ENCODE measurements at regions of chr3 and their contacts with region 1.

Region 1: GRCh38 chr3:111338059-111338698 is 203.8 kb upstream of the CD96 start:
- DNase-seq: peak; percentile 86
- ATAC-seq: peak; percentile 95
- H3K4me3 ChIP-seq: no peak overlapping the region
- H3K27ac ChIP-seq: no peak overlapping the region
- H3K4me1 ChIP-seq: no peaks in the 10 kb centered on the region; the same call in 1 of the 2 replicates
- H3K27me3 ChIP-seq: no peaks in the 10 kb centered on the region
- CTCF ChIP-seq: peak; percentile 91
- POLR2A ChIP-seq: 0 out of 2 replicates have a peak, but pooled peaks have one; percentile 22
- RAD21 ChIP-seq: peak; percentile 95

Region 2: DNA sequence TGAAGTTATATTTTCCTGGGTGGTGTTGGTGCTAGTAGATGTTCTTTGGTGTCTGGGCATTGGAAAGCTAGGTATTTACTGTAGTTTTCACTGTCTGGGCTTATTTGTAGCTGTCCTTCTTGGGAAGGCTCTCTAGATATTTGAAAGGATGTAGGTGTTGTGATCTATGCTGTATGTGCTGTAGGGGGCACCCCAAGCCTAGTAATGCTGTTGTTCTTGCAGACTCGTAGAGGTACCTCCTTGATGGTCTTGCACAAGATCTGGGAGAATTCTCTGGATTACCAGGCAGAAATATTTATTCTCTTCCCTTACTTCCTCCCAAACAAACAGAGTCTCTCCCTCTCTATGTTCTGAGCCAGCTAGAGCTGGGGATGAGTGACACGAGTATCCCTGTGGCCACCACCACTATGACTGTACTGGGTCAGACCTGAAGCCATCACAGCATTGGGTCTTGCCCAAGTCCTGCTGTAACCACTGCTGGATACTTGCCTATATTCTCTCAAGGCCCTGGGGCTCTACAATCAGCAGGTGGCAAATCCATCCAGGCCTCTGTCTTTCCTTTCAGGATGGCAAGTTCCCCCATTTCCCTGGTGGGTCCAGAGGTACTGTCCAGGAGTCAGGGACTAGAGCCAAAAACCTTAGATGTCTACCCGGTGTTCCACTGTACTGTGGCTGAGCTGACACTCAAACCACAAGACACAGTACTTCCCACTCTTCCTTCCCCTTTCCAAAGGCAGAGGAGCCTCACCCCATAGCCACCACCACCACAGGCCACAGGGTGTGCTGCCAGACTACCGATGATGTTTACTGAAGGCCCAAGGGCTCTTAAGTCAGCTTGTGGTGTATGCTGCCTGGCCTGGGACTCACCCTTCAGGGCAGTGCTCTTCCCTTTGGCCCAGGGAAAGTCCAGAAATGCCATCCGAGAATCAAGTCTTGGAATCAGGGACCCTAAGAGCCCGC is 1805.6 kb before region 1 on chr3:
- CTCF ChIA-PET with region 1: interaction called, 6 read pairs
- POLR2A ChIA-PET with region 1: no interaction called
- dilution Hi-C with region 1: no loop called
- in situ Hi-C with region 1: loop called (anchors 10 kb)
- intact Hi-C with region 1: loop called (anchors 5 kb)
- DNase-seq: peak; percentile 83
- ATAC-seq: peak; percentile 96
- H3K4me3 ChIP-seq: no peak overlapping the region
- H3K27ac ChIP-seq: no peak overlapping the region
- H3K4me1 ChIP-seq: no peaks in the 10 kb centered on the region
- H3K27me3 ChIP-seq: no peaks in the 10 kb centered on the region
- CTCF ChIP-seq: peak; percentile 72
- POLR2A ChIP-seq: no peak
- RAD21 ChIP-seq: peak; percentile 80

Region 3: DNA sequence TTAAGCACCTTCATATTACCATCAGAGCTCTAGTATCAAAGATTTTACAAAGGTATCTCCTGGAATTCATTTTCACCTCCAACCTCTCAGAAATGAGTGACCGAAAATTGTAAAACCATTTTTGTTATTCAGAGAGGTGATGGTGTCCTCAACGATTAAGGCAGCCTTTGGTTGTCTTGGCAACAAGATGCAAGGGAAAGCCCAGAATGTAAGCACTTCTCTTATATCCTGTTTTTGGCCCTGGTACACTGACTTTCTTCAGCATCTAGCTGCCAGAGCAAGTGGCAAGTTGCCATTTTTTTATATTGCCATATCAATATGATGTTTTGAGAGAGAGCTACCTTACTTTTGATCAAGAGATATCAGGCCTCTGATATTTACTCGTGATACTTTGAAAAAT is 651.5 kb before region 1 on chr3:
- CTCF ChIA-PET with region 1: no interaction called
- POLR2A ChIA-PET with region 1: no interaction called
- dilution Hi-C with region 1: no loop called
- in situ Hi-C with region 1: no loop called
- intact Hi-C with region 1: loop called (anchors 5 kb)
- DNase-seq: peak; percentile 20
- ATAC-seq: no peak
- H3K4me3 ChIP-seq: no peak overlapping the region
- H3K27ac ChIP-seq: no peak overlapping the region
- H3K4me1 ChIP-seq: peaks cover 3% of the 10 kb centered on the region
- H3K27me3 ChIP-seq: no peaks in the 10 kb centered on the region
- CTCF ChIP-seq: no peak
- POLR2A ChIP-seq: no peak
- RAD21 ChIP-seq: no peak

Region 4: DNA sequence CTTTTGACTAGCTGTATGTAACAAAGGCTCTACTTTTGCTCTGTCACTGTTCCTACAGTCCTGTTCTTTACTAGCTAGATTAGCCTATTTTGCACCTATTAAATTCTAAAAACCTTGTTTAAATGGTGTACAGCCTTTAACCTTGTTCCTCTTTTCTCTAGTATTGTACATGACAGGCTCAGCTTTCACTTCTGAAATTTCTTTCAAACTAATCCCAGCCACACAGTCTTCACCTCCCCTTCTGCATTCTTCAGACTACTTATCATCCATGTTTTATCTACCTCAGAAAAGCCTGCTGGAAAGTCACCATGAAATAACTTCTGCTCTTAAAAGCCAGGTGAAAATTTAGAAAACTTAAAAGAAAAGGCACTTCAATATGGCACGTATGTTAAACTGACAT is 144.1 kb before region 1 on chr3:
- CTCF ChIA-PET with region 1: no interaction called
- POLR2A ChIA-PET with region 1: interaction called, 3 read pairs
- dilution Hi-C with region 1: no loop called
- in situ Hi-C with region 1: no loop called
- intact Hi-C with region 1: loop called (anchors 5 kb)
- DNase-seq: peak; percentile 31
- ATAC-seq: peak; percentile 25; the same call in 1 of the 2 replicates
- H3K4me3 ChIP-seq: no peak overlapping the region
- H3K27ac ChIP-seq: no peak overlapping the region
- H3K4me1 ChIP-seq: no peaks in the 10 kb centered on the region; the same call in 1 of the 2 replicates
- H3K27me3 ChIP-seq: no peaks in the 10 kb centered on the region
- CTCF ChIP-seq: no peak
- POLR2A ChIP-seq: no peak
- RAD21 ChIP-seq: no peak

Region 5: GRCh38 chr3:111277226-111277625 is 61.0 kb before region 1 on chr3:
- CTCF ChIA-PET with region 1: interaction called, 5 read pairs
- POLR2A ChIA-PET with region 1: no interaction called
- dilution Hi-C with region 1: no loop called
- in situ Hi-C with region 1: no loop called
- intact Hi-C with region 1: loop called (anchors 2 kb)
- DNase-seq: peak; percentile 74
- ATAC-seq: peak; percentile 95
- H3K4me3 ChIP-seq: no peak overlapping the region
- H3K27ac ChIP-seq: no peak overlapping the region
- H3K4me1 ChIP-seq: no peaks in the 10 kb centered on the region
- H3K27me3 ChIP-seq: no peaks in the 10 kb centered on the region
- CTCF ChIP-seq: peak; percentile 46
- POLR2A ChIP-seq: no peak
- RAD21 ChIP-seq: peak; percentile 43

Region 6: DNA sequence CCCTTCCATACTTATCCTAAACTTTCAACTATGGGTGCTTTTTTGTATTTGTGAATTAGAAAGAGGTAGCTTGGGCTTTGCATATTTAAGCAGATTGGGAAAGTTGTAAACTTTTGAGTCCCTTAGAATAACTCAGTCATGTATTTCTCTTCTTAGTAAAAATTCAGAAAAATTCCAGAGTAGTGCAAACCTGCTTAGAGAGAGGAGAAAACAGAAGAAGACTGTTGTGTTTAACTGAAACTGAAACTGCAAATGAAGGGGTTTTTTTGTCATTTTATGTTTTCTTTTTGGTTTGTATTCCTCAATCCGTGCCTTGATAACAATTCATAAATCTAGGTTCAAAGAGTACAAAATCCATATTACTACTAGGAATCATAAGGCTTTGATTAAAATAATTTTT is 1026.1 kb after region 1 on chr3:
- CTCF ChIA-PET with region 1: no interaction called
- POLR2A ChIA-PET with region 1: no interaction called
- dilution Hi-C with region 1: no loop called
- in situ Hi-C with region 1: no loop called
- intact Hi-C with region 1: no loop called
- DNase-seq: no peak
- ATAC-seq: no peak
- H3K4me3 ChIP-seq: no peak overlapping the region
- H3K27ac ChIP-seq: no peak overlapping the region
- H3K4me1 ChIP-seq: 0 out of 2 replicates have a peak, but pooled peaks cover 1% of the 10 kb centered on the region
- H3K27me3 ChIP-seq: no peaks in the 10 kb centered on the region; the same call in 1 of the 2 replicates
- CTCF ChIP-seq: no peak
- POLR2A ChIP-seq: no peak
- RAD21 ChIP-seq: no peak